Naive thymus-derived CD4-positive, alpha-beta T cell (primary cell): ENCODE measurements at regions of chr2 and their contacts with region 1.

Region 1: DNA sequence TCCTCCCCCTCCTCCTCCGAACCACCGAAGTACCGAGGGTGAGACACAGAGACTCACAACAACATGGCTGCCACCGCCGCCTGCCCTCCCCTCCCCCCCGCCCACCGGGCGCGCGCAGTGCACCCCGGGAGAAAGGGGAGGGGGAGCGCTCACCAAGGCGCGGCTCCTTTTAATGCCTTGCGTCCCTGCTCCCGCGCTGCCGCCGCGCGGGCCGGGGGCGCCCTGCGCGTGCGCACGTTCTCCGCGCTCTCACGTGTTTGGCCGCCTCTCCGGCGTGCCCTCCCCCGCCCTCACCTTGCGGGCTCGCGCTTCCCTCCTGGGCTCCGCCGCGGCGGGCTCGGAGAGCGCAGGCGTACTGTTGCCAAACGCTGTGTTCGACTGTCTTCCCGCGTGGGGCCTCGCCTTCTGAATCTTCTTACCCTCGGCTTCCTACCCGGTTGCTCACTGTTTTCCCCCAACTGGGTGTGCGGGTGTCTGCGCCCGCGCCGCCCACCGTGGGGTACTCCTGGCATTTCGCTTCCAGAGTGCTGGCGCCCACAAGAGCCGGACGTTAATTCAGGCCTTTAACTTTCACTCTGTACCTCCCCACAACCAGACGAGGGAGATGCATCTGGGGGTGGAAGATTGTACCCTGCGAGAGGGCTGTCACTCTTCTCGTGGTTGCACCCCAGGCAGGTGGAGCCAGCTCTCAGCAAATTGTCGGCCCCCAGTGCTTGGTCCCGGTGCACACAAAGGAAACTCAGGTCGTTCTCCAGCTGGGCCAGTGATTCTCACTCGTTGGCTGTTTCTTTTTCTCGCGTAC is at the start of gene PUM2:
- DNase-seq: peak; percentile 93 to 98 (median 97)
- ATAC-seq: peak; percentile 92
- H3K4me3 ChIP-seq: peak within 1 kb of the TSS; percentile 86
- H3K4me3 Mint-ChIP-seq: peak within 1 kb of the TSS in 3 of 10 donors; percentile 86 to 94 (median 93)
- H3K27ac ChIP-seq: peak within 1 kb of the TSS; percentile 94
- H3K27ac Mint-ChIP-seq: peak within 1 kb of the TSS in 6 of 9 donors; percentile 84 to 95 (median 88)
- H3K4me1 ChIP-seq: peaks cover 32 to 47% of the 10 kb centered on the region in 2 donors
- H3K4me1 Mint-ChIP-seq: peaks cover 28 to 45% (median 37%) of the 10 kb centered on the region in 7 donors
- H3K27me3 ChIP-seq: no peaks in the 10 kb centered on the region
- H3K27me3 Mint-ChIP-seq: no peaks in the 10 kb centered on the region
- total RNA-seq, gene PUM2: 105 to 178 (median 137) TPM

Region 2: DNA sequence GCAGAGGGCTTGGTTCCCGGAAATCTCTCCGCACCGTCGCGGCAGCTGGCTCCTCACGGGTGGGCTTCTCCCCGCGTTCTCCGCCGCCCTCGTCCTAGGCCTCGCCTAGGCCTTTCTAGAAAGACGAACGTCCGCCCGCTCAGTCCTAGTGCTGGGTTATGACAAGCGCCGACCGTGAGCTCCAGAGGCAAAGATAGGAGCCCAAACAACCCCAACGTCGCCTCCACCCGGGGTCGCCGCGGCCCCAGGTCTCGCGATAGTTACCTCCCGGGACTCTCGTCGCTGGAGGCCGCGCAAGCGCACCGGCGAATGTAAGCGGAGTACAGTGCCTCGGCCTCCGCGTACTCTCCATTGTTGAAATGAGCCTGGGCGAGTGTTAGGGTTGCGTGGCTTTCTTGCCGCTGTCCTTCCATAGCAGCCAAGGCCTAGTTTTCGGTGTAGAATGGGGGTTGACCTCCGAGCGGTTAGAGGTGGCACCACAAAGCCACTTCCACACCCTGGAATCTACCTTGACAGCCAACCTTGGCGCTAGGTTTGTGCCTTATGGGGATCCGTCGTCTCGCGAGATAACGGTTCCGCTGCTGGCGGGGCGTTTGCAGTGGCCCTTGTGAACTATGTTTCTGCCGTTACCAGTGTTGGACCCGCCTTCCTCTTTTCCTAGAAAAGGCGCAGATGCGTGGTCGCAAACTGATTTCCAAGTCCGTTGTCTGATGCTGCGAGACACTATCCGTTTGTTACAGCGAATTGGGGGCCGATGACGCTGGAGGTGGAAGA is 449.3 kb before region 1 on chr2 and contains the start of gene TTC32:
- CTCF ChIA-PET with region 1: no interaction called
- POLR2A ChIA-PET with region 1: no interaction called
- intact Hi-C with region 1: loop called (anchors 1 kb)
- DNase-seq: peak; percentile 90 to 98 (median 96)
- ATAC-seq: peak; percentile 91
- H3K4me3 ChIP-seq: peak within 1 kb of the TSS; percentile 95
- H3K4me3 Mint-ChIP-seq: peak within 1 kb of the TSS; percentile 84 to 99 (median 96)
- H3K27ac ChIP-seq: peak within 1 kb of the TSS; percentile 83
- H3K27ac Mint-ChIP-seq: peak within 1 kb of the TSS; percentile 93 to 100 (median 99)
- H3K4me1 ChIP-seq: peaks cover 15 to 23% of the 10 kb centered on the region in 2 donors
- H3K4me1 Mint-ChIP-seq: peaks cover 24 to 35% (median 31%) of the 10 kb centered on the region in 7 donors
- H3K27me3 ChIP-seq: no peaks in the 10 kb centered on the region
- H3K27me3 Mint-ChIP-seq: peaks cover 8 to 19% (median 13%) of the 10 kb centered on the region in 5 donors
- total RNA-seq, gene TTC32: 23.1 to 58.0 (median 44.9) TPM

Region 3: DNA sequence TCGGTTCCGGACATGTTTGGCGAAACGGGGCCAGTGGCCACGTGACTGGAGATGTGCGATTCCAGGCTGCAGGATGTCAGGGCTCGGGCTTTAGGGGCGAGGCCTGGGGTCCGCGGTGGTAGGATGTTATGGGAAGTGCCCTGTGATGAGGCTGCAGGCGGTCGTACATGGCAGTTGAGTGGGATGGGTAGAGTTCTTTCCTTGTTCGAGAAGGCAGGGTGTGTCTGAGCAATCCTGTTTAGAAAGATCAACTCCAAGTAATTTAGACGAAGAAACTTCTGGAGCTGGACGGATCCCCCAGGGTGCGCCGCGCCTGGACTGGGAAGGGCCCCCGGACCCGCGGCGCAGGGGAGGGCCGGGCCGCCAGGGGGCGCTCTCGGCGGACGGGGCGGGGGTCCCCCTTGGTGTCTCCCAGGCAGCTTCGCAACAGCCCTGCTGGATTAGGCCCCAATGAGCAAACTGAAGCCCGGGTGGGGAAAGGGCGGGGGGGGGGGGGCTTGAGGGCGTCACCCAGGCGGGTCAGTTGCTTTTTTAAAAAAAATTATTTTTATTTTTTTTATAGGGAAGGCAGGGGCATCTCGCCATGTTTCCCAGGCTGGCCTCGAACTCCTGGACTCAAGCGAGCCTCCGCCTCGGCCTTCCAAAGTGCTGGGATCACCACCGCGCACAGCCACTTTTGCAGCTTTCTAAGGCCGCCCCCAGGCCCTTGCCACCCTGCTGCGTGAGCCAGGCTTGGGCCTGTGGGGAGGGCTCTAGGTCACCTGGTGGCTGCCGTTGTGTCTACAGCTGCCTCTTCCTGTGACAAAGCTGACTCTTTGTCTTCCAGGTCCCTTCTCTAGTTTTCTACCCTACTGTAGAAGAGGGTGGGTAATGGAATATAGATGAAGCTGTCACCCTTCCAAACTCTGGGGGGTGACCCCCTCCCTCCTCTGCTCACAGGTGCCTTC is 108.6 kb before region 1 on chr2:
- CTCF ChIA-PET with region 1: interaction called, 5 read pairs
- POLR2A ChIA-PET with region 1: no interaction called
- intact Hi-C with region 1: loop called in 1 of 2 experiments (anchors 5 kb)
- DNase-seq: peak in 1 of 9 donors; percentile 63
- ATAC-seq: peak; percentile 38
- H3K4me3 ChIP-seq: peak overlapping the region; percentile 28
- H3K4me3 Mint-ChIP-seq: peak overlapping the region; percentile 41 to 83 (median 63)
- H3K27ac ChIP-seq: no peak overlapping the region
- H3K27ac Mint-ChIP-seq: peak overlapping the region in 7 of 9 donors; percentile 34 to 78 (median 58)
- H3K4me1 ChIP-seq: no peaks in the 10 kb centered on the region
- H3K4me1 Mint-ChIP-seq: peaks cover 3 to 17% (median 9%) of the 10 kb centered on the region in 7 donors
- H3K27me3 ChIP-seq: no peaks in the 10 kb centered on the region
- H3K27me3 Mint-ChIP-seq: peaks cover 0 to 15% (median 6%) of the 10 kb centered on the region in 5 donors

Region 4: GRCh38 chr2:20326163-20326780 is 24.7 kb before region 1 on chr2:
- CTCF ChIA-PET with region 1: interaction called, 11 read pairs
- POLR2A ChIA-PET with region 1: interaction called, 6 read pairs
- intact Hi-C with region 1: loop called (anchors 1 kb)
- DNase-seq: peak in 8 of 9 donors; percentile 22 to 55 (median 39)
- ATAC-seq: peak; percentile 93
- H3K4me3 ChIP-seq: no peak overlapping the region
- H3K4me3 Mint-ChIP-seq: peak overlapping the region in 6 of 10 donors; percentile 1 to 44 (median 14)
- H3K27ac ChIP-seq: no peak overlapping the region
- H3K27ac Mint-ChIP-seq: peak overlapping the region in 6 of 9 donors; percentile 0 to 85 (median 42)
- H3K4me1 ChIP-seq: peaks cover 6 to 8% of the 10 kb centered on the region in 2 donors
- H3K4me1 Mint-ChIP-seq: peaks cover 59 to 92% (median 85%) of the 10 kb centered on the region in 7 donors
- H3K27me3 ChIP-seq: no peaks in the 10 kb centered on the region
- H3K27me3 Mint-ChIP-seq: no peaks in the 10 kb centered on the region

Region 5: GRCh38 chr2:20411361-20411894 is 60.5 kb after region 1 on chr2:
- CTCF ChIA-PET with region 1: interaction called, 6 read pairs
- POLR2A ChIA-PET with region 1: no interaction called
- intact Hi-C with region 1: loop called (anchors 1 kb)
- DNase-seq: peak; percentile 27 to 67 (median 55)
- ATAC-seq: peak; percentile 100
- H3K4me3 ChIP-seq: no peak overlapping the region
- H3K4me3 Mint-ChIP-seq: no peak overlapping the region
- H3K27ac ChIP-seq: no peak overlapping the region
- H3K27ac Mint-ChIP-seq: no peak overlapping the region
- H3K4me1 ChIP-seq: no peaks in the 10 kb centered on the region
- H3K4me1 Mint-ChIP-seq: peaks cover 0 to 6% (median 0%) of the 10 kb centered on the region in 7 donors
- H3K27me3 ChIP-seq: no peaks in the 10 kb centered on the region
- H3K27me3 Mint-ChIP-seq: peaks cover 0 to 43% (median 8%) of the 10 kb centered on the region in 5 donors

Region 6: DNA sequence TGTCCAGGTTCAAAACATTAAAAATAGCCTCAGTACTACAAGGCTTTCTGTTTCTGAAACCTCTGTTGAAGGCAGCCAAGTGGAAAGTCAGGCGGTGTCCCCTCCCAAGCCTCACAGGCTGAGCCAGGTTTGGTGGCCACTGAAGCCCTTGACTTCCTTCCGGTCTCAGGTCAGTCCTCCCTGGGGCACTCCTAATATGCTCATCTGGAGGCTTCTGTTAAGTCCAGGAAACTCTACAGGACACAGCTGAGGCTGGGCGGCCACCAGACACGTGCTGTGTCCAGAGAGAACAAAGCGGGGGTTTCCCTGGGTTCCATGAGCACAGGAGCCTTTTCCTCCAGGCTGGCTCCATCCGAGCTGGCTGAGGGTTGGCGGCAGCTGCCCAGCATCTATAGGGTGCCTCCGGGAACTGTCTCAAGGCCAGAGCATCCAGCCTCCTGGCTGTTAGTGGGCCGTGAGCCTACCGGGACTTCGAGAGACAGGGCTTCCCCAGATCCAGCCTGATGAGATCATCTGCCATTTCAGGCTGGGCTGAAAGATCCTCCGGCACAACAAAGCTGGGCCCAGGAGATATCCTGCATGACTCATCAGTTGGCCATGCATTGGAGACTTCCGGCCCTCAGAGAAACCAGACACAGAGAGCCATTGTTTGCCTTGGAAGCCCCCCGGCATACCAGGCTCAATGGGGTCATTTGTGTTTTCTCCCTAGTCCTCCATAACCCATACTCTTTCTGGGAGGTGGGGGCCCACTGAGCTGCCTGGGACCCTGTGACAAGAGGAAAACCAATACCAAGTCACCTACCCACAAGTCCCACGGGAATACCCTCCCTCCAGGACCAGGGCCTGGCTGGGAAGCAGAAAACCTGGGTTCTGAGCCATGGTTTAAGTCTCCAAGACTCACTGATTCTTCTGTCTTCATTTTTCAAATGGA is 228.2 kb after region 1 on chr2:
- CTCF ChIA-PET with region 1: no interaction called
- POLR2A ChIA-PET with region 1: no interaction called
- intact Hi-C with region 1: loop called in 1 of 2 experiments (anchors 5 kb)
- DNase-seq: no peak
- ATAC-seq: no peak
- H3K4me3 ChIP-seq: no peak overlapping the region
- H3K4me3 Mint-ChIP-seq: no peak overlapping the region
- H3K27ac ChIP-seq: no peak overlapping the region
- H3K27ac Mint-ChIP-seq: no peak overlapping the region
- H3K4me1 ChIP-seq: peaks cover 13% of the 10 kb centered on the region in 2 donors
- H3K4me1 Mint-ChIP-seq: peaks cover 9 to 22% (median 10%) of the 10 kb centered on the region in 7 donors
- H3K27me3 ChIP-seq: no peaks in the 10 kb centered on the region
- H3K27me3 Mint-ChIP-seq: no peaks in the 10 kb centered on the region

Region 7: DNA sequence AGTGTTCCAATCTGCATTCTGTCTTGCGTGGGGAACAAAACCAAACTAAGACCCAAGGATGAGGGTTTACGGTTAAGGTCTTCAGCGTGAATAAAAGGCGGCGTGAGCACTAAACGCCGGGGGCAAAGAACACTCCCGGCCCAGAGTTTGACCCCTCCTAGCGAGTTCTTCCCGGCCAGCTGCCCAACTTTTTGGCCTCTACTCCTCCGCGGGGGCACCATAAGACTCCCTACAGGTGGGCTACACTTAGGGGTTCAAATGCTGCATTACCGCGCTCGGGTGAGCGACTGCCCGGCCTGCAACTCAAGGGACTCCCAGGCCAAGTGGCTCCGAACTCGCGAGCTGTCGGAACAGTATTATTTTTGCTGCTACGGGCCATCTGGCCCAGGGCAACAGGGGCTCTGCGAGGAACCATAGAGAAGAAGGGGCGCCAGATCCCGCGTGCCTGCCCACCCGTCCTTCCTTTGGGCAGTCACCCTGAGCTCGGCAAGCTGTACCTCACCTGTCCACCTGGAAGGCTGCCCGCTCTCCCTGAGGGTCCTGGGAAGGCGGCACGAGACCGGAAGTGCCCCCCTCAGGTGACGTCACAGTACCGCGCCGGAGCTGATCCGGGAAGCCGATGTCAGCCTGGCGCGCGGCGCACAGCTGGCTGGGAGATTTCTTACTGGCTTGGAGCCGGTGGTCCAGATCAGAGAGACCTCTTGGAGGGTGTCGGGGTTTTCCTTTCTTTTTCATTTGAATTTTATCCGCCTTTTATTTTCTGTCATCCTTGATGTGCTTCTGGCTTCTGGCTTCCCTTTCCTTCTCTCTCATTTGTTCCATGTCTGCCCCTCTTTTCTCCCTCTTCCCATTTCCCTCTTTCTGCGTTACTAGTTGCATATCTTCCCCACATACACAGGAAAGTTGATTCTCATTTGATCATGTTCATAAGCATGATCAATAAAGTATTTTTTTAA is 471.9 kb after region 1 on chr2 and contains the start of gene LDAH:
- CTCF ChIA-PET with region 1: no interaction called
- POLR2A ChIA-PET with region 1: interaction called, 7 read pairs
- intact Hi-C with region 1: loop called (anchors 1 to 2 kb)
- DNase-seq: peak; percentile 71 to 84 (median 81)
- ATAC-seq: peak; percentile 91
- H3K4me3 ChIP-seq: peak within 1 kb of the TSS; percentile 98
- H3K4me3 Mint-ChIP-seq: peak within 1 kb of the TSS; percentile 93 to 99 (median 97)
- H3K27ac ChIP-seq: peak within 1 kb of the TSS; percentile 86
- H3K27ac Mint-ChIP-seq: peak within 1 kb of the TSS; percentile 95 to 99 (median 98)
- H3K4me1 ChIP-seq: no peaks in the 10 kb centered on the region
- H3K4me1 Mint-ChIP-seq: peaks cover 7 to 45% (median 25%) of the 10 kb centered on the region in 7 donors
- H3K27me3 ChIP-seq: no peaks in the 10 kb centered on the region
- H3K27me3 Mint-ChIP-seq: peaks cover 0 to 2% (median 0%) of the 10 kb centered on the region in 5 donors
- total RNA-seq, gene LDAH: 11.1 to 29.8 (median 18.4) TPM

Region 8: GRCh38 chr2:20868377-20868776 is 517.4 kb after region 1 on chr2:
- CTCF ChIA-PET with region 1: no interaction called
- POLR2A ChIA-PET with region 1: no interaction called
- intact Hi-C with region 1: no loop called
- DNase-seq: peak in 8 of 9 donors; percentile 1 to 75 (median 13)
- ATAC-seq: peak; percentile 54
- H3K4me3 ChIP-seq: no peak overlapping the region
- H3K4me3 Mint-ChIP-seq: no peak overlapping the region
- H3K27ac ChIP-seq: no peak overlapping the region
- H3K27ac Mint-ChIP-seq: peak overlapping the region in 2 of 9 donors; percentile 57 to 65
- H3K4me1 ChIP-seq: peaks cover 0 to 2% of the 10 kb centered on the region in 2 donors
- H3K4me1 Mint-ChIP-seq: peaks cover 0 to 11% (median 7%) of the 10 kb centered on the region in 7 donors
- H3K27me3 ChIP-seq: no peaks in the 10 kb centered on the region
- H3K27me3 Mint-ChIP-seq: peaks cover 13 to 48% (median 27%) of the 10 kb centered on the region in 5 donors